ENCODE measurements at regions of chr5 and their contacts with region 1.

Region 1: GRCh38 chr5:132829742-132830435 is 558 bp downstream of the SHROOM1 start:
- DNase-seq: peak; percentile 93
- H3K27ac ChIP-seq: peak overlapping the region; percentile 66
- CTCF ChIP-seq: peak; percentile 98

Region 2: GRCh38 chr5:132877938-132878337 is 48.0 kb after region 1 on chr5:
- CTCF ChIA-PET with region 1: interaction called, 33 read pairs
- POLR2A ChIA-PET with region 1: no interaction called
- DNase-seq: no peak
- H3K27ac ChIP-seq: no peak overlapping the region
- CTCF ChIP-seq: no peak

Region 3: GRCh38 chr5:132883261-132883834 is 53.5 kb after region 1 on chr5:
- CTCF ChIA-PET with region 1: interaction called, 33 read pairs
- POLR2A ChIA-PET with region 1: no interaction called
- DNase-seq: peak; percentile 69
- H3K27ac ChIP-seq: no peak overlapping the region
- CTCF ChIP-seq: peak; percentile 90

Region 4: DNA sequence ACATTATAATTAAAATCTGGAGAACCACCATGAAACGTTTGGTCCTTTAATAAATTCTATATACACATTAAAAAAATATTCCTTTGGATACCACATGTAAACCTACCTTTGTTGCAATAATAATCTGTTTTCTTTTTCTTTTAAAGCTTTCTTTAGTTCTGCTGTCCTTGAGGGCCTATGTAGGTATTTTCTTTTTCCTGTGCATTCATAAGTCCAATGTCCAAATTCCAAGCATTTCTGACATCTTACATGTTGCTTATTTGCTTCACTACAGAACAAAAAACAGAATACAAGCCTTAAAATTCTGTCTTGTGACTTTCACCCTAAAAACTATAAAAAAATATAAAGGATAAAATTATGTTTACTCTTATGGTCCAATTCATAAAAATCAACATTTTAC is 176.8 kb after region 1 on chr5:
- CTCF ChIA-PET with region 1: no interaction called
- POLR2A ChIA-PET with region 1: no interaction called
- DNase-seq: no peak
- H3K27ac ChIP-seq: no peak overlapping the region
- CTCF ChIP-seq: no peak

Region 5: GRCh38 chr5:134132372-134133034 is 1302.6 kb after region 1 on chr5:
- CTCF ChIA-PET with region 1: no interaction called
- POLR2A ChIA-PET with region 1: no interaction called
- DNase-seq: no peak
- H3K27ac ChIP-seq: no peak overlapping the region
- CTCF ChIP-seq: no peak

Measured in RWPE1 (cell line).